Heart right ventricle (tissue), 16 donors: ENCODE measurements at regions of chr4 and their contacts with region 1.

Region 1: GRCh38 chr4:140764774-140765392 is 8.7 kb upstream of the TBC1D9 start:
- DNase-seq: no peak
- ATAC-seq: peak in 1 of 8 donors; percentile 53
- H3K4me3 ChIP-seq: no peak overlapping the region
- H3K27ac ChIP-seq: no peak overlapping the region
- H3K4me1 ChIP-seq: peaks cover 0 to 9% (median 0%) of the 10 kb centered on the region in 9 donors
- H3K27me3 ChIP-seq: no peaks in the 10 kb centered on the region
- CTCF ChIP-seq: no peak

Region 2: DNA sequence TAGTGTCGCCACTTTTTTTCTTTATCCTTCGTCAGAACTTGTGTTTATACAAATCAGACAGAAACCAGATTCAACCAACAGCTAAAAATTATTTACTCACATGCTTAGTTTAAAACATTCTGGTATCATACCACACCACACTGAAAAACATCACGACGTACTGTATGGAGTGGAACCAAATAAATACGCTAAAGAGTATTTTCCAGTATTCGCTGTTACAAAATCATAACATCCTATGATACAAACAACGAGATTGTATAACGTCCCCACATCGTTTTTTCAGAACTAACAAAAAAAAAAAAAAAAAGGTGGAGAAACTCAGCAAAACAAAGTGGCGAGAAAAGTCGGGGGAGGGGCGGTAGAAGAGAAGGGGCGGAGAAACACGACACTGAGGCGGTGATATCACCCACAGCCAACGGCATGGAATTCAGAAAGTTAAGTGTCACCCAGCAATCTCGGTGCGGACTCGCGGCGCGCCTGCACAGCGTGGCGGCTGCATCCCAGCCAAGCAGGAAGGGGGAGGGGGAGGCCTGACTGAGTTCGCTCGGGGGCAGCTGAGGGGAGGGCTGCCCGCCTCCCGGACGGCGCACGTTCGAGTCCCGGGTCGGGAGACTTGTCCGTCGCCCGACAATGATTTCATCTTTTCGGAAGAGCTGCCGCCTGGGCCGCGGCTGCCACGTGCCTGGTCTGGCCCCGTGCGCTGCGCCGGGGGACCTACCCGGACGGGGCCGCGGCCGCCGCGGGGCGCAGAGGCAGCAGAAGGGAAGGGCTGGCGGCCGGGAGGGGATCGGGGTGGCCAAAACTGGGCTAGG is 1209.8 kb before region 1 on chr4:
- intact Hi-C with region 1: no loop called
- DNase-seq: peak; percentile 91 to 95
- ATAC-seq: peak; percentile 79 to 85 (median 82)
- H3K4me3 ChIP-seq: peak overlapping the region; percentile 65 to 98 (median 92)
- H3K27ac ChIP-seq: peak overlapping the region; percentile 92 to 99 (median 98)
- H3K4me1 ChIP-seq: peaks cover 10 to 77% (median 67%) of the 10 kb centered on the region in 9 donors
- H3K27me3 ChIP-seq: no peaks in the 10 kb centered on the region
- CTCF ChIP-seq: no peak

Region 3: GRCh38 chr4:140829825-140830224 is 64.9 kb after region 1 on chr4:
- intact Hi-C with region 1: loop called in 1 of 10 experiments (anchors 10 kb)
- DNase-seq: no peak
- ATAC-seq: no peak
- H3K4me3 ChIP-seq: no peak overlapping the region
- H3K27ac ChIP-seq: no peak overlapping the region
- H3K4me1 ChIP-seq: no peaks in the 10 kb centered on the region
- H3K27me3 ChIP-seq: no peaks in the 10 kb centered on the region
- CTCF ChIP-seq: no peak